SK-N-SH (cell line): ENCODE measurements at regions of chr6 and their contacts with region 1.

Region 1: GRCh38 chr6:89940225-89941027 is 46.2 kb downstream of the GJA10 start:
- DNase-seq: peak; percentile 83
- H3K4me3 ChIP-seq: no peak overlapping the region; a peak in 1 of 4 replicates
- H3K27ac ChIP-seq: no peak overlapping the region
- H3K4me1 ChIP-seq: no peaks in the 10 kb centered on the region; a peak in 1 of 4 replicates
- H3K27me3 ChIP-seq: no peaks in the 10 kb centered on the region
- CTCF ChIP-seq: peak; percentile 82
- EP300 ChIP-seq: no peak
- RAD21 ChIP-seq: peak; percentile 98

Region 2: GRCh38 chr6:89921691-89922090 is 18.7 kb before region 1 on chr6:
- CTCF ChIA-PET with region 1: interaction called, 10 read pairs
- POLR2A ChIA-PET with region 1: no interaction called
- DNase-seq: no peak
- H3K4me3 ChIP-seq: no peak overlapping the region
- H3K27ac ChIP-seq: no peak overlapping the region
- H3K4me1 ChIP-seq: no peaks in the 10 kb centered on the region
- H3K27me3 ChIP-seq: no peaks in the 10 kb centered on the region
- CTCF ChIP-seq: no peak
- EP300 ChIP-seq: no peak
- RAD21 ChIP-seq: no peak

Region 3: DNA sequence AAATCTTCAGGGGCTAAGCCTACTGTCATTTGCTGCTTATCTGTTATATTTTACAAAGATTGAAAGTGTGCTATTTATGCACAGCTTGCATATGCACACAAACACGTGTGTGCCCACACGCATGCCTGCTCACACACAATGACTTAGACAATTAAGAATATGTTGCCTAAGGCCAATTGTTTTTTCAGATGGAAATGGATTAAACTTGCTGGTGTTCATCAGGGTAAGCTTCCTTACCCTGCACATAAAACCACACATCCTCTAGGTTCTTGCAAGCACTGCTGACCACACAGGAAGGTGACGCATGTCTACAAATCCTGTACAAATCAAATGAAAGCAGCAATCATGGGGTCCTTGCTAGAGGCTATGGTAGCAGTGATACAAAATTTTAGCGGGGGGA is 12.3 kb after region 1 on chr6:
- CTCF ChIA-PET with region 1: interaction called, 19 read pairs
- POLR2A ChIA-PET with region 1: no interaction called
- DNase-seq: no peak
- H3K4me3 ChIP-seq: no peak overlapping the region
- H3K27ac ChIP-seq: peak overlapping the region in 1 of 2 experiments; percentile 62; a peak in 2 of 4 replicates
- H3K4me1 ChIP-seq: peaks cover 0 to 28% of the 10 kb centered on the region in 2 experiments; a peak in 2 of 4 replicates
- H3K27me3 ChIP-seq: no peaks in the 10 kb centered on the region
- CTCF ChIP-seq: no peak
- EP300 ChIP-seq: no peak
- RAD21 ChIP-seq: no peak

Region 4: DNA sequence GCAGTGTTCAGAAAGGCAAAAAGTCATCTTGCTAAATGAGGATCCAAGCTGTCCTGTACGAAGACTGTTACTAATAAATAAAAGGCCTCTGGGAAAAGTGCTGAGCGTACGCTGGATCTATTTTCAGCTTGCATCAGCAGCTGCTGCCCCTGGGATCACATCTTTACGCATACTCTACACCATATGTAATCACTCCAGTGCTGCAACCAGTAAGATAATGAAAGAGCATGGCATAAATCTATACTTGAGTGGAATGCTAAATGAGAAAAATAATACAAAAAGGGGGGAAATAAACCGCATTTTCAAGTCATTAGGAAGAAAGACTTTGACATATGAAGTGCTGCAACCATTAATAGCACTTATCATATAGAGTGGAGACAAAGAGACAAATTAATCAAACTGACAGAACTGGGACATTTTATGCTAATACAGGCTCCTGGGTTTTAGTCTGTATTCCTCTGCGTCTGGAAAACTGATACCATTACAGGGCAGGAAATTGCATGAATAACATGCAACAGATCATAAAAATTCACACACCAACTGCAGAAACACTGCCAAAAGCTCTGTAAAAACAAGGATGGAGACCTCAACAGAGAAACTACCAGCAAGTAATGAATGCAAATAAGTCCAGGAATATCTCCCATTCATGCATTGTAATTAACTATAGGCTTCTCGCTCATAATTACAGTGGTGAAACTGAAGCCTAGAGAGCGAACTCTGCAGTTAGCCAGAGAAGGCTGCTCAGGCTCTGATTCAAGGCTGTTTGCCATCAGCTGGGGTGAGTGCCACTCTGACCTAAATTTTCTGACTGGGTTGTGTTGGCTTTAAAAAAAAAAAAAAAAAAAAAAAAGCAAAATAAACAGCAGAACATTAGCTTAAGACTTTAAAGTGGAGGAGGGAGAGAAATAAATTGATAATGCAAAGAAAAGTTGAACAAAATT is 37.7 kb after region 1 on chr6:
- CTCF ChIA-PET with region 1: interaction called, 15 read pairs
- POLR2A ChIA-PET with region 1: no interaction called
- DNase-seq: peak; percentile 54
- H3K4me3 ChIP-seq: peak overlapping the region in 1 of 2 experiments; percentile 21; a peak in 2 of 4 replicates
- H3K27ac ChIP-seq: peak overlapping the region; percentile 51 to 99
- H3K4me1 ChIP-seq: peaks cover 20 to 31% of the 10 kb centered on the region in 2 experiments; a peak in 3 of 4 replicates
- H3K27me3 ChIP-seq: no peaks in the 10 kb centered on the region
- CTCF ChIP-seq: no peak
- EP300 ChIP-seq: peak; percentile 38 to 94; a peak in 2 of 4 replicates
- RAD21 ChIP-seq: peak; percentile 35

Region 5: DNA sequence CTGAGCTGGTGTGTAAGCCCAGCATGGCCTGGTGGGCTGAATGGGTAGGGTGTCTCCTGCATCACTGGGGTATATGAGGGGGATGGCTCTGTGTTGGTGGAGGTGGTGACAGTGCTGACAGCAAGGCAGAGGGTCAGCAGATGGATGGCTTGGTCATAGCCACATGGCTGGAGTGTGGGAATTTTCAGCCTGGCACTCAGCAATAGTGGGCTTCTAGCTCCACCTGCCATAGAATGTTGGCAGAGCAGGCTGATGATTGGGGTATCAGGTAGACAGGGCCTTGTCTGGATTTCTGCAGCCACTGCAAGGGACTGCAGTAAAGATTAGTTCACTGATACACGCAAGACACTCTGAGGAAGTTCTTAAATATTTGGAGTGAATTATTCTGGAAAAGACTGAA is 493.7 kb after region 1 on chr6:
- CTCF ChIA-PET with region 1: interaction called, 11 read pairs
- POLR2A ChIA-PET with region 1: no interaction called
- DNase-seq: no peak
- H3K4me3 ChIP-seq: no peak overlapping the region
- H3K27ac ChIP-seq: no peak overlapping the region
- H3K4me1 ChIP-seq: no peaks in the 10 kb centered on the region
- H3K27me3 ChIP-seq: no peaks in the 10 kb centered on the region
- CTCF ChIP-seq: 0 out of 2 replicates have a peak, but pooled peaks have one; percentile 11
- EP300 ChIP-seq: no peak
- RAD21 ChIP-seq: peak; percentile 37

Region 6: GRCh38 chr6:90454836-90455427 is 514.5 kb after region 1 on chr6:
- CTCF ChIA-PET with region 1: interaction called, 12 read pairs
- POLR2A ChIA-PET with region 1: no interaction called
- DNase-seq: no peak
- H3K4me3 ChIP-seq: no peak overlapping the region
- H3K27ac ChIP-seq: no peak overlapping the region
- H3K4me1 ChIP-seq: no peaks in the 10 kb centered on the region
- H3K27me3 ChIP-seq: no peaks in the 10 kb centered on the region
- CTCF ChIP-seq: no peak
- EP300 ChIP-seq: no peak
- RAD21 ChIP-seq: no peak

Region 7: GRCh38 chr6:90478789-90479602 is 538.6 kb after region 1 on chr6:
- CTCF ChIA-PET with region 1: interaction called, 169 read pairs
- POLR2A ChIA-PET with region 1: interaction called, 3 read pairs
- DNase-seq: peak; percentile 79
- H3K4me3 ChIP-seq: no peak overlapping the region
- H3K27ac ChIP-seq: no peak overlapping the region
- H3K4me1 ChIP-seq: peaks cover 5 to 7% of the 10 kb centered on the region in 2 experiments; a peak in 3 of 4 replicates
- H3K27me3 ChIP-seq: no peaks in the 10 kb centered on the region
- CTCF ChIP-seq: peak; percentile 89
- EP300 ChIP-seq: no peak
- RAD21 ChIP-seq: peak; percentile 100